ENCODE measurements at regions of chr3 and their contacts with region 1.

Region 1: DNA sequence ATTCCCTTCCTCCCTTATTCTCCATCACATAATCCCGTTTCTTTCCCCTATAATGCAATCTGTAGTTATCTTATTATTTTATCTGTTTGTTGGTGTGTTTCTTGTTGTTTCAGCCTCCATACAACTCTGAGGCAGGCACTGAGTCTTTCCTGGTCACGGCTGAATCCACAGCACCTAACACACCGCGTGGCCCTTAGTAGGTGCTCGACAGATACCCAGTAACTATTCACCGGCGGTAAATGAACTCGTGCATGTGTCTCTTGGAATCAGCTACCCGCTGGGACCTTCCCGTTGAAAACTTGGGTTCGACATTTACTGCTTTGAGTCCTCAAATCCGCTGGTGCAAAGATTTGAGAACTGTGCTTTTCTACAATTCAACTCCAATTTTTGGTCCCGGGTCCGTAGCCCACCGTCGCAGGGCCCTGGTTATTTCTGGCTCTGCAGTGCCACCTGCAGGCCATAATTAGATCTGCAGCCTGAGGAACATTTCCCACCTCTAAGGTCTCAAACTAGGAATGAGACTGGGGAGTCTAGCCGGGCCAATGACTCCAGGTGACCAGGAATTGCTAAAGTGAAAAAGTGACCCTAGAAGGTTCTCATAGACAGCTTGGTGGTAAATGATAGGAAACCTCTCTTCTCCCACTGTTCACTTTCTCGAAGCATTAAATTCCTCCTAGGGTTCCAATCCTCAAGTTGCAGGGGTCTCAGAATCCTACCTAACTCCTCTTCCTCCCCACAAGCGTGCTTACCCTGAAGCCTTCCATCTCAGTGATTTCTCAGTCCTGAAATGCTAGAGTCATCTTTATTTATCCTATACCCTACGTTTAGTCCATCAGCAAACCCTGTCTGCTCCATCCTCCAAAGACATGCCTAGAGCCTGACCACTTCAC is 40.0 kb upstream of the TRH start:
- DNase-seq: peak in 1 of 2 experiments; percentile 42
- H3K4me3 ChIP-seq: no peak overlapping the region
- H3K4me3 Mint-ChIP-seq: no peak overlapping the region
- H3K27ac Mint-ChIP-seq: no peak overlapping the region
- H3K4me1 ChIP-seq: no peaks in the 10 kb centered on the region
- H3K4me1 Mint-ChIP-seq: no peaks in the 10 kb centered on the region
- H3K27me3 ChIP-seq: no peaks in the 10 kb centered on the region
- H3K27me3 Mint-ChIP-seq: no peaks in the 10 kb centered on the region
- CTCF ChIP-seq: peak; percentile 78 to 91

Region 2: DNA sequence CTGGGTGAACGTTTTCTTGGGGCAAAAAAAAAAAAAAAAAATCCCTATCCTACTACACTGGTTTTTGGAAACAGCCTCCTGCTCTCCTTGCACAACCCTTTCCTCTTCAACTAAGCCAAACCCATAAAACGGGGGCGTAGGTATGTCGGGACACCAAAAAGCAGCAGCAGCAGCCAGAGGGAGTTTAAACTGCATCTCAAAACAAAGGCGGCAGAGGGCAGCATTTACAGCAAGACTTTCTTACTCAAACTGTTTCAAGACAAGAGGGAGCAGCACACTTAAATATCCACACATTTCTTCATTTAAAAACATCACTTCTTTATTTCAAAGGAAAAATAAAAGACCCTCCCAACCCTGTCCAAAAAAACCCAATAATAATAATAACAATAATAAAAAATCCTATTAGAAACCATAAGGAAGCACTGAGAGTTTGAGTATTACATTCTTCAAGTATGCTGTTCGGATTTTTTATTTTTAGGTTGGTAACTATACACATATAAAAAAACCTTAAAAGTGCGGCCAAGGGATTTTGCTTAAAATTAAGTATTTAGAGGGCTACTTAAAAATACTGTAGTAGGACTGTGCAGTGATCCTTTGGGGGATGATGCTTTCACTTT is 284.1 kb before region 1 on chr3:
- CTCF ChIA-PET with region 1: no interaction called
- POLR2A ChIA-PET with region 1: no interaction called
- intact Hi-C with region 1: loop called (anchors 1 kb)
- DNase-seq: peak; percentile 74 to 77
- H3K4me3 ChIP-seq: no peak overlapping the region
- H3K4me3 Mint-ChIP-seq: peak overlapping the region; percentile 29
- H3K27ac Mint-ChIP-seq: peak overlapping the region; percentile 33
- H3K4me1 ChIP-seq: peaks cover 27% of the 10 kb centered on the region
- H3K4me1 Mint-ChIP-seq: peaks cover 18% of the 10 kb centered on the region
- H3K27me3 ChIP-seq: no peaks in the 10 kb centered on the region
- H3K27me3 Mint-ChIP-seq: no peaks in the 10 kb centered on the region
- CTCF ChIP-seq: peak; percentile 67 to 68

Region 3: DNA sequence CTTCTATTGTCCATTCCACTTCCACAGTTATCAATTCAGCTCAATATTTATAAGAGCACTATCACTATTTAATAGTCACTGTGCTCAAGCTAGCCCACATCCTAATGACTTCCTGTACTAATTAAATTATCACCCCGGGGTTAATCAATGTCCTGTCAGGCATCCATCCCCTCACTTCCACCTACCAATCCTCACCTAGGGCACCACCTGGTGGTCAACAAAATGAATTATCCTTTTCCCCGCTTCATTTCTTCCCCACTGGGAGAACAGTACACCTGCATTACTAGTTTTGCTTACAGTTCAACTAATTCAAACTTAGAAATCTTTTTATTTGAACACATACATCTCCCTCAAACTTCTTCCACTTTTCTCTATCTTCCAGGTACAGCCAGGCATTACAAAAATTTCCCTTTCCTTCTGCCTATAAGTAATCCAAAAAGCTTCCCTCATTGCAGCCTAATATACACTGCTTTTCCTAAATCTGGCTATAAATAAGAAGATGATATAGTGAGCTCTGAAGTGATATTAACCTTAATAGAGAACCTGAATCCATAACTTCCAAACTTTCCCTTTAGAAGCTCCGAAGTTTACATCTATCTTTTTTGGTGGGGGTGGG is 109.4 kb before region 1 on chr3:
- CTCF ChIA-PET with region 1: no interaction called
- POLR2A ChIA-PET with region 1: no interaction called
- intact Hi-C with region 1: loop called (anchors 1 kb)
- DNase-seq: peak; percentile 47 to 72
- H3K4me3 ChIP-seq: no peak overlapping the region
- H3K4me3 Mint-ChIP-seq: no peak overlapping the region
- H3K27ac Mint-ChIP-seq: no peak overlapping the region
- H3K4me1 ChIP-seq: peaks cover 12% of the 10 kb centered on the region; the same call in 1 of the 2 replicates
- H3K4me1 Mint-ChIP-seq: peaks cover 14% of the 10 kb centered on the region
- H3K27me3 ChIP-seq: no peaks in the 10 kb centered on the region
- H3K27me3 Mint-ChIP-seq: no peaks in the 10 kb centered on the region
- CTCF ChIP-seq: peak; percentile 58 to 77

Region 4: GRCh38 chr3:129893581-129894070 is 40.9 kb before region 1 on chr3 and contains the start of gene TMCC1:
- CTCF ChIA-PET with region 1: no interaction called
- POLR2A ChIA-PET with region 1: no interaction called
- intact Hi-C with region 1: loop called (anchors 2 kb)
- DNase-seq: peak; percentile 94
- H3K4me3 ChIP-seq: peak within 1 kb of the TSS; percentile 97
- H3K4me3 Mint-ChIP-seq: peak within 1 kb of the TSS; percentile 92
- H3K27ac Mint-ChIP-seq: peak within 1 kb of the TSS; percentile 88
- H3K4me1 ChIP-seq: peaks cover 14% of the 10 kb centered on the region
- H3K4me1 Mint-ChIP-seq: peaks cover 14% of the 10 kb centered on the region
- H3K27me3 ChIP-seq: no peaks in the 10 kb centered on the region
- H3K27me3 Mint-ChIP-seq: no peaks in the 10 kb centered on the region
- CTCF ChIP-seq: no peak
- total RNA-seq, gene TMCC1: 26.0 and 27.8 TPM in 2 replicates

Region 5: GRCh38 chr3:129908381-129908780 is 26.1 kb before region 1 on chr3:
- CTCF ChIA-PET with region 1: no interaction called
- POLR2A ChIA-PET with region 1: no interaction called
- intact Hi-C with region 1: loop called (anchors 2 kb)
- DNase-seq: peak; percentile 78 to 86
- H3K4me3 ChIP-seq: no peak overlapping the region
- H3K4me3 Mint-ChIP-seq: peak overlapping the region; percentile 6
- H3K27ac Mint-ChIP-seq: peak overlapping the region; percentile 82
- H3K4me1 ChIP-seq: peaks cover 11% of the 10 kb centered on the region
- H3K4me1 Mint-ChIP-seq: peaks cover 8% of the 10 kb centered on the region
- H3K27me3 ChIP-seq: no peaks in the 10 kb centered on the region
- H3K27me3 Mint-ChIP-seq: no peaks in the 10 kb centered on the region
- CTCF ChIP-seq: no peak